Activated CD4-positive, alpha-beta memory T cell treated with anti-CD3 and anti-CD28 coated beads, Interleukin-2, amount 10 ng/mL, durations not matched to agents 7 days and 5 days (primary cell): ENCODE measurements at regions of chr3 and their contacts with region 1.

Region 1: DNA sequence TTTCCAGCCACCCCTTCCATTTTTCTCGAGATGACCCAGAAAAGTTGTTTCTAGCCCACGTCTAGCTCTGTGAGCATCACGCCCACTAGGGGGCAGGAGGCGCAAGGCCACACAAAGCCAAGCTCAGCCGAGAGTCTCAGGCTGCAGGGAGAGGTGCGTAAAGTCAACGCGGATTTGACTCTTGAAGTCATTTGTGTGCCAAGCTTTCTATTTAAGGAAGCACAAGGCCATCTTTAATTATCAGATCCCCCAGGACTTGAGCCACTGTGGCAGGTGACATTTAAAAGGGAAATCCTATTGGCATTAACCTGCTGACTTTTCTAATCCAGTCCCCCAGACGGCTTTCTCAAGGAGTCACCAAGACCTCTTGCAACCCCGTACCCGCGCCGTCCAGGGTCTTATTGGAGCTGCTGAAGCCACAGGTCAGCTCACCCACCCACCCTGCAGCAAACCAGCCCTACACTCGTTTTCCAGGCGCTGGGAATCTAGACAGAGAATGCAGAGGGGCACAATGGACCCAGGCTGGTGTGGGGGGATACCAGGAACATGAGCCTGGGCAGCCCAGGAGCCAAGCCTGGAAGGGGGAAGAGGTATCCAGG is 62.1 kb downstream of the CAPN7 start:
- DNase-seq: peak; percentile 87
- H3K4me3 Mint-ChIP-seq: no peak overlapping the region
- H3K27ac Mint-ChIP-seq: peak overlapping the region; percentile 24
- H3K4me1 Mint-ChIP-seq: peaks cover 68% of the 10 kb centered on the region
- H3K27me3 Mint-ChIP-seq: no peaks in the 10 kb centered on the region

Region 2: GRCh38 chr3:15205934-15206661 is 62.0 kb before region 1 on chr3 and contains the start of gene CAPN7:
- CTCF ChIA-PET with region 1: interaction called, 26 read pairs
- POLR2A ChIA-PET with region 1: interaction called, 13 read pairs
- DNase-seq: peak; percentile 96
- H3K4me3 Mint-ChIP-seq: peak within 1 kb of the TSS; percentile 82
- H3K27ac Mint-ChIP-seq: peak within 1 kb of the TSS; percentile 91
- H3K4me1 Mint-ChIP-seq: peaks cover 32% of the 10 kb centered on the region
- H3K27me3 Mint-ChIP-seq: no peaks in the 10 kb centered on the region
- total RNA-seq, gene CAPN7: 29.6 to 30.1 TPM

Region 3: GRCh38 chr3:15300323-15301078 is 32.4 kb after region 1 on chr3:
- CTCF ChIA-PET with region 1: interaction called, 12 read pairs
- POLR2A ChIA-PET with region 1: interaction called, 3 read pairs
- DNase-seq: no peak
- H3K4me3 Mint-ChIP-seq: no peak overlapping the region
- H3K27ac Mint-ChIP-seq: peak overlapping the region; percentile 52
- H3K4me1 Mint-ChIP-seq: peaks cover 85% of the 10 kb centered on the region
- H3K27me3 Mint-ChIP-seq: no peaks in the 10 kb centered on the region

Region 4: GRCh38 chr3:15332405-15333098 is 64.4 kb after region 1 on chr3 and contains the start of gene SH3BP5:
- CTCF ChIA-PET with region 1: interaction called, 209 read pairs
- POLR2A ChIA-PET with region 1: interaction called, 33 read pairs
- DNase-seq: peak; percentile 80
- H3K4me3 Mint-ChIP-seq: peak within 1 kb of the TSS; percentile 85
- H3K27ac Mint-ChIP-seq: peak within 1 kb of the TSS; percentile 73
- H3K4me1 Mint-ChIP-seq: peaks cover 58% of the 10 kb centered on the region
- H3K27me3 Mint-ChIP-seq: no peaks in the 10 kb centered on the region
- total RNA-seq, gene SH3BP5: 39.0 to 40.9 TPM

Region 5: DNA sequence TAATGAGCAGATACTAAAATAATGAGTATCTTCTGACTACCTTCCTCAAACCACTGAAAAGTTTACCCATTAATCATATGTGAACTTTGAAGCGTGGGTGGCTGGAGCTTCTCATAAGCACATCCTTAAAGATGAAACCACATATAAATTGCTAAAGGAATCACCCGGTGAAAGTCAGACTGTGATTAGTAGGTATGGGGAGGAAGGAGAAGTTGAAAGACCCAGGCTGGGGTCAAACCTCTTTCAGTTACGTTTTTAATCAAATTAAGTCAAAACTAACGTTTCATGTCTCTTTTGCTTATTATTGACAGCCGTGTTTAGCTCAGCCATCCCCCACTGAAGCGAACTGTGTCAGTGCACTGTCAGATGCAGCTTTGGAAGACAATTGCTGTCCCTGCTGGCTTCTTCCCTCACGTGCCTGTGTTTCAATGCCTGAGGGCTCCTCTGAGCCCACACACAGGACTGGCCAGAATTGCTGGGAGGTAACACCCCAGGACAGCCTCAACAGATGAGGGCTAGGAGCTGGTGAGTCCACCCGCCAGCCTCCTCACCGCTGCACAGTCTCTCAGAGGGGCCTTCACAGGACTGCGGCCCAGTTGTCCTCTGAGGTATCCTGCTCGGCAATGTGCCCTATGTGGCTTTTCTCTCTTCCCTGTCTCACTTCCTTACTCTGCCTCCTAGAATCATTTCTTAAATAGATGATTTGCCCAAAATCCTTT is 93.5 kb after region 1 on chr3:
- CTCF ChIA-PET with region 1: interaction called, 12 read pairs
- POLR2A ChIA-PET with region 1: interaction called, 8 read pairs
- DNase-seq: peak; percentile 42
- H3K4me3 Mint-ChIP-seq: peak overlapping the region; percentile 11
- H3K27ac Mint-ChIP-seq: peak overlapping the region; percentile 42
- H3K4me1 Mint-ChIP-seq: peaks cover 49% of the 10 kb centered on the region
- H3K27me3 Mint-ChIP-seq: no peaks in the 10 kb centered on the region

Region 6: DNA sequence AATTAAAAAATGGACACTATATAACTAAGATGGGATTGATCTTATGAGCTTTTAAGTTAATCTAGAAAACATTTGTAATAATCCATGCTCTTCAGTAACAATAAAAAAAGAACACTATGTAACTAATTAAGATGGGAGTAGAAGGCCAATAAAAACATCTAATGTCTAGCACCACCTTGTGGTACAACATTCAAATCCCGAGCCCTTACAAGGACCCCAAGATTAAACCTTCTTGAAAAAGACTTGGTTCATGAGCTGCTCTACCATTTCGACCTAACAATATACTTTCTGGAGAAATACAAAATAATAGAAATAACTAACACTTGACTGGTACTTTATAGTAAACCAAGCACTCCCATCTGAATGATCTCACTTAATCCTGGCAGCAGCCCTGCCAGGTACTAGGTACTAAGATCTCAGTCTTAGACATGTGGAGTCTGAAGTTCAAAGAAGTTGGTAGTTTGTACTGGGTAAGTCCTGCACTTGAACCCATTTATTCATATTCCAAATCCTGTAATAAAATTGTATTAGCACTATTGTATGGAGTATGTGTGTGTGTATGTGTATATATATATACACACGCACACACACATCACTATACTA is 137.4 kb after region 1 on chr3:
- CTCF ChIA-PET with region 1: interaction called, 181 read pairs
- POLR2A ChIA-PET with region 1: interaction called, 5 read pairs
- DNase-seq: peak; percentile 22
- H3K4me3 Mint-ChIP-seq: no peak overlapping the region
- H3K27ac Mint-ChIP-seq: no peak overlapping the region
- H3K4me1 Mint-ChIP-seq: peaks cover 12% of the 10 kb centered on the region
- H3K27me3 Mint-ChIP-seq: no peaks in the 10 kb centered on the region